ENCODE measurements at regions of chr1 and their contacts with region 1.

Region 1: DNA sequence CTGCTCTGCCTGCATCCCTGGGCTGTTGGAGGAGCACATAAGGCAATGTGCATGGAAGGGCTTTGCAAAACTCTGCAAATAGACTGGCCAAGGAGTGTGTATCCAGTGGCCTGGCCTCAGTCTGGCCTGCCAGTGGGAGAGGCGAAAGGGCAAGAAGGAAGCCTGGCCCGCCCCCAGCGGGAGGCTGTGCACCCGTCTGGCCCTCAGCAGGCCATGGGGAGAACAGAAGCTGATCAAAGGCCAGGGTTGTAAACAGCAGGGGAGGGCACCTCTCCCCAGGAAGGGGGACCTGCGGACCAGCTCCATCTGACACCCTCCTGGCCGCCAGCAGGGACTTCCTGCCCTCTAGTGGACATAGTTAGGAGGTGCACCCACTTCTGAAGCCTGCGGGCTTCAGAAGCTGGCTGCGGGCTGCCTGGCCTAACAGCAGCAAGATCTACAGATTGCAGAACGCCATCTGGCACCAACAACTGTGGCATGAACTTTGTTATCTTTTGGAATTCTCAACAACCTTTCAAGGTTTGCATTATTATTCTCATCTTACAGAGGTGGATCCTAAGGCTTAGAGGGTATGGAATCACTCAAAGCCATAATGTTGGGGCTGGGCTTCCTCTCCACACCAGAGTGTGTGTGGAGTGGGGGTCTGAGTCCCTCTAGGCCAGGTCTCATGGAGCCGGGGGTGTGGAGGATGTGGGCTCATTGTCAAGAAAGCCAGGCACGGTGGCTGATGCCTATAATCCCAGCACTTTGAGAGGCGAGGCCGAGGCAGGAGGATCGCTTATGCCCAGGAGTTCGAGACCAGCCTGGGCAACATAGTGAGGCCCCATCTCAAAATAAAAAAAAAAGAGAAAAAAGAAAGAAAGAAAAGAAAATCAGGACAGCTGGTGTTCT is 18.9 kb upstream of the CDK18 start:
- DNase-seq: no peak
- H3K4me3 ChIP-seq: no peak overlapping the region
- H3K27ac ChIP-seq: no peak overlapping the region
- H3K27me3 ChIP-seq: peaks cover 50% of the 10 kb centered on the region
- CTCF ChIP-seq: peak; percentile 93

Region 2: DNA sequence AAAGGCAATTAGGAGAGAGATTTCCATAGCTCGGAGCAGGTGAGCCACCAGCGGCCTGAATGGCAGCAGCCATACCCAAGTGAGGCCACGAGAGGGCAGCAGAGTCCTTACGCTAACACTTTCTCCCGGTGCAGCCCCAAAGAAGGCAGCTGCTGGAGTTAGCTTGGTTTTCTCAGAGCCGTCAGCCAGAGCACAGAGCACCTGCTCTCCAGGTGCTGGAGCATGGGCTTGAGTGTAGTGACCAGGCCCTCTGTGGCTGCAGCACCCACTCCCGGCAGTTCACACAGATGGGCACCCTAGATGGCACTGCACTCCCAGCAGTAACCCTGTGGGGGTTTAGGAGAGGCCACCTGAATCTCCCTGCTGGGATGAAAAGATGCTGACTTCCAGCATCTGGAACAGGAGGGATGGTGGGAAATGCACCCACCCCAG is 212.0 kb before region 1 on chr1:
- CTCF ChIA-PET with region 1: interaction called, 10 read pairs
- POLR2A ChIA-PET with region 1: no interaction called
- DNase-seq: no peak
- H3K4me3 ChIP-seq: no peak overlapping the region
- H3K27ac ChIP-seq: no peak overlapping the region
- H3K27me3 ChIP-seq: no peaks in the 10 kb centered on the region
- CTCF ChIP-seq: peak; percentile 97

Region 3: DNA sequence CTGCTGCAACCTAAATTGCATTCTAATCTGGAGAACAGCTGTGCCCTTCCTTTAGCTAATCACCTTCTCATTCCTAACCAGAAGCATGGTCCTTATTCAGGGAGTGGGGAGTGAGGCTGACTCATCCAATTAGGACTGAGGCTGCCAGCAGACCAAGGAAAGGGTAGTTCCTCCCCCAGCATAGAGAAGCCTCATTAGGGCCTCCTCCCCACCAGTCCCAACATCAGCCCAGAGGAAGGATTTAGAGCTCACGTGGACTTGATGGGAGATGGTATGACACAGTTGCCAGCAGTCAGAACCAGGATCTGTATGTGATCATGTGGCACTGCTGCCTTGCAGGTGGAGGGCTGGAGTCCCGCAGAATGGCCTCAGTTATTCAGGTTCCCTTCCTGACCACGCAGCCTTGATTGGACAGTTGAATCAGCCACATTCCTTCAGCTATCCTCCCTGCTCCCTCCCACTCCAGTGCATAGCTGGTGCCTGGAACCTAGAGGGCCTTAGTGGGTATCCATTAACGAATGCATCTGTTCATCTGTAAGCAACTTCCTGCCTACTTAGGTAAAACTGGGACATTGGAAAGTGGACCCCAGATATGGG is 136.6 kb before region 1 on chr1:
- CTCF ChIA-PET with region 1: interaction called, 165 read pairs
- POLR2A ChIA-PET with region 1: interaction called, 3 read pairs
- DNase-seq: no peak
- H3K4me3 ChIP-seq: no peak overlapping the region
- H3K27ac ChIP-seq: no peak overlapping the region
- H3K27me3 ChIP-seq: peaks cover 51% of the 10 kb centered on the region
- CTCF ChIP-seq: no peak

Region 4: DNA sequence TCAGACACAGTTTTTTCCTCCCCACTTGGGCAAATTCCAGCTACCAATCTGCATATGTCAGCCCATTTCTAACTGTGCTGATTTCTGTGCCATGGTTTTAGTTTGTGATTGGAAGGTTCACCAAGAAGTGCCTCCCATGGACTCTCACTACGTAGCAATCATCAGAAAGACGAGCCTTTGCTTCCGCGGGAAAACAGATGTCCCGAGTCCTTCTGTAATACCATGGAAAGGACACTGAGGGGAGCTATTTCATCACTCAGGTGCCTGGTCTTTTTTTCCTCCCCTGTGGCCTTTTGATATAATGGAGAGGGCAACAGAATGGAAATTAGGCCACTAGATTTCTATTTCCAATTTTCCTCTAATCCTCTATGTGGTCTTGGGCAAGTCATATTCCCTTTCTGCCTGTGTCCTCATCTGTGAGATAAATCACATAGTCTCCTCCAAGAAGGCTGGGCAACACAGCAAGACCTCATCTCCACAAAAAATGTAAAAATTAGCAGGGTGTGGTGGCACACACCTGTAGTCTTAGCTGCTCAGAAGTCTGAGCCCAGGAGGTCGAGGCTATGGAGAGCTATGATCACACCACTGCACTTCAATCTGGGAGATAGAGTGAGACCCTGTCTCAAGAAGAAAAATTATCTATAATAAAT is 88.5 kb before region 1 on chr1:
- CTCF ChIA-PET with region 1: interaction called, 76 read pairs
- POLR2A ChIA-PET with region 1: no interaction called
- DNase-seq: no peak
- H3K4me3 ChIP-seq: no peak overlapping the region
- H3K27ac ChIP-seq: no peak overlapping the region
- H3K27me3 ChIP-seq: peaks cover 9% of the 10 kb centered on the region
- CTCF ChIP-seq: peak; percentile 70

Region 5: DNA sequence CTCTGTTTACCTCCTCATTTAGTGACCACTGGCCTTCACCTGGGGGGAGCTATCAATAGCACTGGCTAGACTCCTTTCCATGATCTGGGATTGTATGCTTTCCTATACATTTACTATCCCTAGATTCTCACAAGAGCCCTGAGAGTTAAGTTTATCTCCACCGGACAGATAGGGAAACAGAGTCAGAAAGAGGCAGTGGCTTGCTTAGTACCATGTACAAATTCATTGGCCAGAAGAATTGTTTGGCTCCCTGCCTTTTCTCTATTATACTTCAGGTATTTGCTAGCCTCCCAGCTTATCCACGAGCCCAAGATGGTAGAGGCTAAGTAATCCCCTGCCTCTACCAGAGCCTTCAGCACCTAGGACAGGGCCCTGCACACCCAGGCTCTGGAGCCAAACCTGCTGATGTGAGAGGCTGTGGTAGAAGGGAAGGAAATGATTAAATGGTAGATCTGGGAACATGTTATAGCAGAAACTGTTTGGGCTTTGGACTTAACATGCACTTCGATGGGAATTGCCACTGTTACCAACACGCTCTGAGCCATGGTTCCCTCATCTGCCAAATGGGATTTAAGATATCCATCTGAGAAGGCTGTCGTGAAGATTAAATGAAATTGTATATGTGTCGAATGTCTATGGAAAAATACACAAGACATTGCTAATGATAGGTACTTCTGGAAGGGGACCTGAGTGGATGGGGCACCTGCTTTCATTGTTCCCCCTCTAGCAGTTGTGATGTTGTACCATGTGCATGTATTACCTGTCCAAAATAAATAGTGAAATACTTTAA is 26.6 kb before region 1 on chr1:
- CTCF ChIA-PET with region 1: interaction called, 10 read pairs
- POLR2A ChIA-PET with region 1: no interaction called
- DNase-seq: no peak
- H3K4me3 ChIP-seq: no peak overlapping the region
- H3K27ac ChIP-seq: no peak overlapping the region
- H3K27me3 ChIP-seq: peaks cover 61% of the 10 kb centered on the region
- CTCF ChIP-seq: no peak

Region 6: GRCh38 chr1:205505791-205506190 is 20.2 kb after region 1 on chr1:
- CTCF ChIA-PET with region 1: interaction called, 22 read pairs
- POLR2A ChIA-PET with region 1: no interaction called
- DNase-seq: no peak
- H3K4me3 ChIP-seq: no peak overlapping the region
- H3K27ac ChIP-seq: no peak overlapping the region
- H3K27me3 ChIP-seq: peaks cover 48% of the 10 kb centered on the region
- CTCF ChIP-seq: no peak